ENCODE measurements at regions of chr3 and their contacts with region 1.

Region 1: GRCh38 chr3:52685709-52686691 is at the starts of genes GNL3 and PBRM1:
- DNase-seq: peak; percentile 96
- H3K4me3 Mint-ChIP-seq: peak within 1 kb of the TSS; percentile 91
- H3K27ac Mint-ChIP-seq: peak within 1 kb of the TSS; percentile 96
- H3K4me1 Mint-ChIP-seq: peaks cover 72% of the 10 kb centered on the region
- H3K27me3 Mint-ChIP-seq: no peaks in the 10 kb centered on the region
- total RNA-seq, gene GNL3: 167 to 172 TPM
- total RNA-seq, gene PBRM1: 52.3 to 59.2 TPM

Region 2: GRCh38 chr3:52455283-52456168 is 230.5 kb before region 1 on chr3 and contains the start of gene NISCH:
- CTCF ChIA-PET with region 1: no interaction called
- POLR2A ChIA-PET with region 1: no interaction called
- intact Hi-C with region 1: loop called (anchors 5 kb)
- DNase-seq: peak; percentile 97
- H3K4me3 Mint-ChIP-seq: peak within 1 kb of the TSS; percentile 89
- H3K27ac Mint-ChIP-seq: peak within 1 kb of the TSS; percentile 87
- H3K4me1 Mint-ChIP-seq: peaks cover 35% of the 10 kb centered on the region
- H3K27me3 Mint-ChIP-seq: no peaks in the 10 kb centered on the region
- total RNA-seq, gene NISCH: 50.8 to 60.2 TPM

Region 3: GRCh38 chr3:52481819-52482521 is 204.0 kb before region 1 on chr3:
- CTCF ChIA-PET with region 1: no interaction called
- POLR2A ChIA-PET with region 1: no interaction called
- intact Hi-C with region 1: no loop called
- DNase-seq: peak; percentile 26
- H3K4me3 Mint-ChIP-seq: no peak overlapping the region
- H3K27ac Mint-ChIP-seq: no peak overlapping the region
- H3K4me1 Mint-ChIP-seq: no peaks in the 10 kb centered on the region
- H3K27me3 Mint-ChIP-seq: no peaks in the 10 kb centered on the region

Region 4: GRCh38 chr3:52670621-52671521 is 15.1 kb before region 1 on chr3:
- CTCF ChIA-PET with region 1: interaction called, 12 read pairs
- POLR2A ChIA-PET with region 1: interaction called, 40 read pairs
- intact Hi-C with region 1: loop called (anchors 1 kb)
- DNase-seq: peak; percentile 84
- H3K4me3 Mint-ChIP-seq: peak overlapping the region; percentile 51
- H3K27ac Mint-ChIP-seq: peak overlapping the region; percentile 82
- H3K4me1 Mint-ChIP-seq: peaks cover 42% of the 10 kb centered on the region
- H3K27me3 Mint-ChIP-seq: no peaks in the 10 kb centered on the region

Region 5: DNA sequence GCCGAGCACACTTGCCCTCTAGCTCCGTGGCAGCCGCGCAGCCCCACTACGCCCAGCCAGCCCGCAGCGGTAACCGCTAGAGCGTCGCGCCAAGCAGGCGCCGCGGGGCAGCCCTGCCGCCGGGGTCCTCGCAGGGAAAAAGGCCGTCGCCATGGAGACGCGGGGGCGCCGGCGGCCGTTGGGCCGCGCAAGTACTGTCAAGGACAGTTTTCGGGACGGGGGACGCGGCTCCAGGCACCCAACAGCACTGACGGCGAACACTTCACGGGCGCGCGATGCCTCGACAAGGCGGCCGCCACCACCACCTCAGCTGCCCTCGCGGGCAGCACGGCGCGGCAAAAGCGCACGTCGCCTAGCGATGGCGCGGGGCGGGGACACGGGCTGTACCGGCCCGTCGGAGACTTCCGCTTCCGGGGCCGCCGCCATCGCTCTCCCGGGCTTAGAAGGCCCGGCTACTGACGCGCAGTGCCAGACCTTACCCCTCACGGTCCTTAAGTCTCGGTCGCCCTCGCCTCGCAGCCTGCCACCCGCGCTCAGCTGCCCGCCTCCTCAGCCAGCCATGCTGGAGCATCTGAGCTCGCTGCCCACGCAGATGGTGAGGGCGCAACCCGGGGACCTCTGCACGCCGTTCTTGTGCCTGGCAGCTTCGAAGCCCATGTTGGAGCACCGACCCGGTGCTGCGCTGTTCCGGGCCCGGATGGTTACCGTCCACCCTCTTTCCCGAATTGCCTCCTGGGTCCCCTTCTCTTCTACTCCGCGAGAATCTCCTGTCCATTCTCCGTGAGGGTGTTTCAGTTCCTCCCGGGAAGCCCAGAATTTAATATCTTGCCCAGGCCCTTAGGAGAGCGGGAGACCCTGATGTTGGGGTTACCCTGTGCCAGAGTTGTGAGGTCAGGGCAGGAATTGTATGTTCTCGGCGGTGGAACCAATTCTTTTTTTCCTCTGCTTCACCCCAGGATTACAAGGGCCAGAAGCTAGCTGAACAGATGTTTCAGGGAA is 20.0 kb after region 1 on chr3 and contains the starts of genes GLT8D1 and SPCS1:
- CTCF ChIA-PET with region 1: interaction called, 3 read pairs
- POLR2A ChIA-PET with region 1: interaction called, 12 read pairs
- intact Hi-C with region 1: loop called (anchors 1 kb)
- DNase-seq: peak; percentile 88
- H3K4me3 Mint-ChIP-seq: peak within 1 kb of the TSS; percentile 96
- H3K27ac Mint-ChIP-seq: peak within 1 kb of the TSS; percentile 89
- H3K4me1 Mint-ChIP-seq: peaks cover 25% of the 10 kb centered on the region
- H3K27me3 Mint-ChIP-seq: no peaks in the 10 kb centered on the region
- total RNA-seq, gene GLT8D1: 34.1 to 36.9 TPM
- total RNA-seq, gene SPCS1: 132 TPM

Region 6: DNA sequence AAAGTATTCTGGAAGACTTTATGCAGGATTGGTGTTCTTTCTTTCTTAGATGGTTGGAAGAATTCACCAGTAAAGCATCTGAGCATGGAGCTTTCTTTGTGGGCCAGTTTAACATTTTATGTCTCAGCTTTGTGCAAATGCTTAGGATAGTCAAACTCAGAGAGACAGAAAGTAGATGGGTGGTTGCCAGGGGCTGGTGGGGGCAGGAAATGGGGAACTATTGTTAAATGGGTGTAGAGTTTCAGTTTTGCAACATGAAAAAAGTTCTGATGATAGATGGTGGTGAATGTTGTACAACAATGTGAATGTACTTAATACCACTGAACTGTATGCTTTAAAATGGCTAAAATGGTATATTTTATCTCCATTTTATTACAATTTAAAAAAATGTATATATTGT is 44.7 kb after region 1 on chr3:
- CTCF ChIA-PET with region 1: no interaction called
- POLR2A ChIA-PET with region 1: no interaction called
- intact Hi-C with region 1: no loop called
- DNase-seq: no peak
- H3K4me3 Mint-ChIP-seq: no peak overlapping the region
- H3K27ac Mint-ChIP-seq: no peak overlapping the region
- H3K4me1 Mint-ChIP-seq: peaks cover 6% of the 10 kb centered on the region
- H3K27me3 Mint-ChIP-seq: no peaks in the 10 kb centered on the region

Region 7: DNA sequence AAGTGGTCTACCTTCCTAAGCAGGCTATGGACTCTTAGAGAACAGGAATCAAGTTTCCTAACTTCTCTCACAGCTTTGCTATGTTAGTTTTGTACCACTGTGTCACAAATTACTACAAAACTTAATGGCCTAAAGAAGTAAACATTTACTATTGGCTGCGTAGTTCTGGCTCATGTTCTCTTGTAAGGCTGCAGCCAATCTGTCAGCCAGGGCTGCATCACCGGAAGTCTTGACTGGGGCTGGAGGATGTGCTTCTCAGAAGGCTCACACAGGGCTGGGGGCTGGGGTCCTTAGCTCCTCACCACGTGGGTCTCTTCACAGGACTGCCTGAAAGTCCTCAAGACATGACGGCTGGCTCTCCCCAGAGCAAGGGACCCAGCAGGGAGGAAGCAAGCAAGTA is 195.9 kb after region 1 on chr3:
- CTCF ChIA-PET with region 1: no interaction called
- POLR2A ChIA-PET with region 1: no interaction called
- intact Hi-C with region 1: no loop called
- DNase-seq: no peak
- H3K4me3 Mint-ChIP-seq: no peak overlapping the region
- H3K27ac Mint-ChIP-seq: no peak overlapping the region
- H3K4me1 Mint-ChIP-seq: peaks cover 13% of the 10 kb centered on the region
- H3K27me3 Mint-ChIP-seq: no peaks in the 10 kb centered on the region

Region 8: GRCh38 chr3:53045518-53046170 is 359.6 kb after region 1 on chr3 and contains the start of gene SFMBT1:
- CTCF ChIA-PET with region 1: no interaction called
- POLR2A ChIA-PET with region 1: interaction called, 3 read pairs
- intact Hi-C with region 1: loop called (anchors 10 kb)
- DNase-seq: peak; percentile 83
- H3K4me3 Mint-ChIP-seq: peak within 1 kb of the TSS; percentile 96
- H3K27ac Mint-ChIP-seq: peak within 1 kb of the TSS; percentile 97
- H3K4me1 Mint-ChIP-seq: peaks cover 44% of the 10 kb centered on the region
- H3K27me3 Mint-ChIP-seq: peaks cover 2% of the 10 kb centered on the region
- total RNA-seq, gene SFMBT1: 22.1 to 22.8 TPM